AG04449 (cell line): ENCODE measurements at regions of chr6 and their contacts with region 1.

Region 1: GRCh38 chr6:16183187-16183664 is 54.3 kb downstream of the MYLIP start:
- DNase-seq: peak; percentile 16
- H3K4me3 ChIP-seq: no peak overlapping the region
- CTCF ChIP-seq: peak; percentile 46

Region 2: GRCh38 chr6:15691250-15691869 is 491.9 kb before region 1 on chr6:
- CTCF ChIA-PET with region 1: interaction called, 113 read pairs
- POLR2A ChIA-PET with region 1: no interaction called
- DNase-seq: peak; percentile 46
- H3K4me3 ChIP-seq: no peak overlapping the region
- CTCF ChIP-seq: peak; percentile 99

Region 3: DNA sequence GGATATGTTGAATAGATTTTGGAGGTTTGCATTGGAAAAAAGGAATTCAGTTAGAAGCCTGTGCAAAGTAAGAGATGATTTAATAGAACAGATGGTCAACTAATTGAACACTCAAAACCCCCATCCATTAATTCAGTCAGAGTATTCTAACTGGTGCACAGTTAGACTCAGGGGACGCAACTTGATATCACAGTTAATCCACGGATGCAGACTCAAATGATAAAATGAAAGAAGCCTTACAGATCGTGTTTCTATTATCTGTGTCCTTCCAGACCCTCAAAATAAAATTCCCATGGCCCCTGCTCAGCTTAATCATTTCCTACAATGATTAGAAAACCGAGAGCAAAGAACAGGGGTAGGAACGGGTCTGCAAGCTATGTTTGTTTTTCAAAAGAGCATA is 475.0 kb before region 1 on chr6:
- CTCF ChIA-PET with region 1: interaction called, 10 read pairs
- POLR2A ChIA-PET with region 1: no interaction called
- DNase-seq: no peak
- H3K4me3 ChIP-seq: no peak overlapping the region
- CTCF ChIP-seq: no peak

Region 4: DNA sequence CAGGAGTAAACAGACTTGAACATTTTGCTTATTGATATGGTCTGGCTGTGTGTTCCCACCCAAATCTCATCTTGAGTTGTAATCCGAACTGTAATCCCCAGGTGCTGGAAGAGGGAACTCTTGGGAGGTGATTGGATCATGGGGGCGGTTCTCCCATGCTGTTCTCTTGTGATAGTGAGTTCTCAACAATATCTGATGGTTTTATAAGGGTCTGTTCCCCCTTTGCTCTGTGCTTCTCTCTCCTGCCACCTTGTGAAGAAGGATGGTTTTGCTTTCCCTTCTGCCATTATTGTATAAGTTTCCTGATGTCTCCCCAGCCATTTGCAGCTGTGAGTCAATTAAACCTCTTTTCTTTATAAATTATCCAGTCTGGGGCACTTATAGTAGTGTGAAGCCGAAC is 14.4 kb before region 1 on chr6:
- CTCF ChIA-PET with region 1: interaction called, 18 read pairs
- POLR2A ChIA-PET with region 1: no interaction called
- DNase-seq: no peak
- H3K4me3 ChIP-seq: no peak overlapping the region
- CTCF ChIP-seq: peak; percentile 57

Region 5: DNA sequence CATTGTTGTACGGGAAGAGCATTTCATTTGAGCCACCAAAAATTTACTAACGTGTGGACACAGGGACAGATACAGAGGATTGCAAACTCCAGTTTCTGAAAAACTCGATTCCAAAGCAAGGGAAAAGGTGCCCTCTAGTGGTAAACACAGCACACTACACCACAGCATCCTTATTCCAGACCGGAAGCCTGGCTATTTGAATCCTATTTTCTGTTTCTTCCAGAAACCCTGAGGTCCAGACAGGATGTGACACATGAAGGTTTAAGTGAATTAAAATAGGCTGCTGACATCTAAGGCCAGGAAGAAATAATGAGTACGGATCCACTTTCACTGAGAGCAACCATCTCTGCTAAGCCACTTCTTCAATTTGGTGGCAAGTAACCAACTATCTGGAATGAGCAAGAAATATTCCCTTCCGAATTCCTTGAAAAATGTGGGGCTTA is 23.4 kb after region 1 on chr6:
- CTCF ChIA-PET with region 1: interaction called, 43 read pairs
- POLR2A ChIA-PET with region 1: no interaction called
- DNase-seq: peak; percentile 65
- H3K4me3 ChIP-seq: no peak overlapping the region
- CTCF ChIP-seq: peak; percentile 85